GM10248 (cell line): ENCODE measurements at regions of chr20 and their contacts with region 1.

Region 1: DNA sequence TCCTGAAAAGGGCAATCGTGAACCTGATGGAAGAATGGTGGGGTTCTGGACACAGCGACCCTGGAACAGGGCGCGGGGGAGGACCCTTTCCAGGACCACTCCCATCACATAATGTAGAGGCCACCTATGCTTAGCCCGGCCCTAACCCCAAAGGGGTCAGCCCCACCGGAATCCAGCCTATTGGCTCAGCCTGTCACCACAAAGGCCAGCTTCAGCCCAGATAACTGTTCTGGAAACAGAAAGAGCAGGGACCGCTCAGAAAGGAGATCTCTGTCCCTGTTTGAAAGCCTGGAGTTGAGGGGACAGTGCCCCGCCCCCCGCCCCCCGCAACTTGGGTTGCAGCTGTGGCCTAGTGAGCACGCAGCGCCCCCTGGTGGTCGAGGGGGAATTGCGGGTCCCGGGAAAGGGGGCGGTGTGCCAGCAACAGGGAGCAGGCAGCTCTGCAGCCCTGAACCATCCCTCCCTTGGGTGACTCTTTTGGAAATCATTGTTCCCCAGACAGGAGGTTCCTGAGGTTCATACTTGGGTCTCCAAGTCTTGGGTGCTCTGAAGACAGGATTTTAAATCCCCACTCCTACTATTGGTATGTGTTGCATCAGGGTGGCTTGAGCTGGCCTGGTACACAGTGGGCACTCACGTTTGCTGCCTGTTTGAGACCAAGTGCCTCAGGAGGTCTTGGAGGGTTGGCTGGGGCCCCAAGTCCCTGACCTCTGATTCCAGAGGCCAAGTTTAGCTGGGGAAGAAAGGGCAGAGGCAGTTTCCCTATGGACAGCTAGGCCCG is 1.5 kb downstream of the SIGLEC1 start:
- DNase-seq: peak; percentile 89
- CTCF ChIP-seq: peak; percentile 96

Region 2: GRCh38 chr20:3563548-3564177 is 147.2 kb before region 1 on chr20:
- CTCF ChIA-PET with region 1: interaction called, 49 read pairs
- POLR2A ChIA-PET with region 1: no interaction called
- DNase-seq: peak; percentile 32
- CTCF ChIP-seq: peak; percentile 67

Region 3: DNA sequence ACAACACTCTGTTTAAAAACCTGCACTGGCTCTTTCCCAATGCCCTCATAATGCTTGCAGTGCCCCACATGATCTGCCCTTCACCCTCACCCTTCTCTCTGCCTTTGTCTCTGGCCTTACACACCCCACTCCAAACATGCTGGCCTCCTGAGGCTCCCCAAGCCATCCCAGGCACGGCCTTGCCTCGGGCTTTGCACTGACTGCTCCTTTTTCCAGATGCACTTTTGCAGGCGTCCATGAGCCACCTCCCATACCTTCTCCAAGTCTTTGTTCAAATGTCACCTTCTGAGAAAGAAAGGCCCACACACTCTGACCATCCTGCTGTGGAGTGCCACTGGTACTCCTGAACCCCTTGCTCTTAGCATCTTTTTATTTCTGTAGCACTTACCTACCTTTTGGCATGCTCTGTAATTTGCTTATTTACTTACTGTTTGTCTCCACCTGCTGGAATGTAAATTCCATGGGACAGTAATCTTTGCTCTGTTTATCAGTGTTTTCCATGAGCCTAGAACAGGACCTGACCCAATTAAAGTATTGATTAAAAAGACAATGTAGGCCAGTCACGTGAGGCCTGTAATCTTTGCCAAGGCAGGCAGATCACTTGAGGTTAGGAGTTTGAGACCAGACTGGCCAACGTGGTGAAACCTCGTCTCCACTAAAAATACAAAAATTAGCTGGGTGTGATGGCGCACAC is 78.4 kb before region 1 on chr20:
- CTCF ChIA-PET with region 1: no interaction called
- POLR2A ChIA-PET with region 1: no interaction called
- DNase-seq: no peak
- CTCF ChIP-seq: no peak

Region 4: DNA sequence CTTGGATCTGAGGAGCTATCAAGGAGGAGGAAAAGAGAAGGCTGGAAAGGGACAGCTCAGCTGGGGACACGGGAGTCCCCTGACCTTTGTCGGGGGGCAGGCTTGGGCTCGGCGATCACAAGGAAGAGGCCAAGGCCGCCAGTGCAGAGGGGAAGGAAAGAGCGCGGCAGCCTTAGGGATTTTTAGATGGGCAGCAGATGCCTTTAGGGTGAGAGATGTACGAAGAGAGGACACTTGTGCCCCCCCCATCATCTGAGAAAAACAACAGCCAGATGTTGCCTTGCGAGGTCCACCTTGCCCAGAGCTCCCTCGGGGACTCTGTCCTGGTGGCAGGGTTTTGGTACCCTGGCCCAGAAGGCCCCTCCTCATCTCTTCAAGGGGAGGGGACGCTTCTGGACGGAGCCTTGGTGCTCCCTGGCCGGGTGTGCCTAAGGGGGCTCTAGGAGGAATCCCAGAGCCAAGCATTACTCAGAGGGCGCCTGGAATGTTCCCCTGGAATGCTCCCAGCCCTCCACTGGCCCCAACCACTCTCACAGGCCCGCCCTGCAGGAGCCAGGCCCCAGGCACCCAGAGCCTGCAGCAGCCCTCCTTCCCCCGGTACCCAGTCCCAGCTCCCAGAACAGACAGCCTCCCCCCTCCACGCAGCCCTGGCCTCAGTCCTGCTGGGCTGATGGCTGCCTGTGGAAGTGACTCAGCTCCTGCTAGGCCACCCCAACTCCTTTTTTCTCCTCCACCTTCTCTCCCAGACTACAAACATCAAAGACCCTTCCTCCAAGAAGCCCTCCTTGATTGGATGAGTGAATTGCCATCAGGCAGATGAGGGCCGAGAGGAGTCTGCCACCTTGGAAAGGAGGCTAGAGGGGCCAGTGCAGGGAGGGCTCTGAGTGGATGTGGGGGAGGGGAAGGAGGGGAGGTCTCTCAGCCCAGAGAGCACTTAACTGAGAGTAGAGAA is 30.9 kb before region 1 on chr20:
- CTCF ChIA-PET with region 1: interaction called, 69 read pairs
- POLR2A ChIA-PET with region 1: no interaction called
- DNase-seq: no peak
- CTCF ChIP-seq: no peak

Region 5: GRCh38 chr20:3696200-3696599 is 14.7 kb before region 1 on chr20:
- CTCF ChIA-PET with region 1: interaction called, 64 read pairs
- POLR2A ChIA-PET with region 1: no interaction called
- DNase-seq: no peak
- CTCF ChIP-seq: peak; percentile 17

Region 6: GRCh38 chr20:3734111-3734843 is 23.4 kb after region 1 on chr20:
- CTCF ChIA-PET with region 1: interaction called, 16 read pairs
- POLR2A ChIA-PET with region 1: no interaction called
- DNase-seq: no peak
- CTCF ChIP-seq: no peak

Region 7: GRCh38 chr20:3767427-3768341 is 56.8 kb after region 1 on chr20 and contains the start of gene ADISSP:
- CTCF ChIA-PET with region 1: interaction called, 11 read pairs
- POLR2A ChIA-PET with region 1: no interaction called
- DNase-seq: peak; percentile 100
- CTCF ChIP-seq: peak; percentile 21

Region 8: DNA sequence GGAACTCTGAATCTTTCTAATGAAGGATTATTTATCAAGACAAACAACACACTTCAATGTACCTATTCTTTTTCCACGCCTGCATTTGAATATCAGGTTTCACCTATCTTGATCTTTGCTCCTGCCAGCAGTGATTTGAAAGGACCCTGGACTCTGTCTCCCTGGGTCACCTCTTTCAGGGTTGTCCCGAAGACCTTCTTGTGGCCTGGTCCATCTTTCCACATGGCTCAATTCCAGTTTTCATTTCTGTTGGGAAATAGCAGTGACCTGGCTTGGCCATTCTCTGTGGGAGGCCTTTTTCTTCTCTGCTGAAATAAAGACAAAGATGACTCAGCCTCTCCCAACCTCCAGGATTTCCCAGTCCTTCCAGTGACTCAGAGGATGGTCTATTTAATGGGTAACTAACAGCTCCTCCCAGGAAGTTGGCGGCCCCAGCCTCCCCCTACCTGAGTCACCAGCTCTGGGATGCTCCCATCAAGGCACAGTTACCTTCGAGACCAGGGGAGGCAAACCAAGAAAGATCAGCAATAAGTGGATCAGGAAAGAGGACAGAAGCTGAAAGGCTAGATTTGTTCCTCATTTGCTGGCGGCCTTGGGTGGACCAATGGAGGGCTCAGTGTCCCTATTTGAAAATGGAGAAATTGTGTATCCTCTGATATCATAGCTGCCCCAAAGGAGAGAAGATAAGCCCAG is 424.6 kb after region 1 on chr20:
- CTCF ChIA-PET with region 1: no interaction called
- POLR2A ChIA-PET with region 1: no interaction called
- DNase-seq: no peak
- CTCF ChIP-seq: no peak